Right ventricle myocardium inferior (tissue), 1 donor: ENCODE measurements at regions of chr20 and their contacts with region 1.

Region 1: GRCh38 chr20:25390538-25391528 is at the start of gene ABHD12:
- DNase-seq: peak; percentile 98
- ATAC-seq: peak; percentile 99
- total RNA-seq, gene ABHD12: 23.3 TPM

Region 2: DNA sequence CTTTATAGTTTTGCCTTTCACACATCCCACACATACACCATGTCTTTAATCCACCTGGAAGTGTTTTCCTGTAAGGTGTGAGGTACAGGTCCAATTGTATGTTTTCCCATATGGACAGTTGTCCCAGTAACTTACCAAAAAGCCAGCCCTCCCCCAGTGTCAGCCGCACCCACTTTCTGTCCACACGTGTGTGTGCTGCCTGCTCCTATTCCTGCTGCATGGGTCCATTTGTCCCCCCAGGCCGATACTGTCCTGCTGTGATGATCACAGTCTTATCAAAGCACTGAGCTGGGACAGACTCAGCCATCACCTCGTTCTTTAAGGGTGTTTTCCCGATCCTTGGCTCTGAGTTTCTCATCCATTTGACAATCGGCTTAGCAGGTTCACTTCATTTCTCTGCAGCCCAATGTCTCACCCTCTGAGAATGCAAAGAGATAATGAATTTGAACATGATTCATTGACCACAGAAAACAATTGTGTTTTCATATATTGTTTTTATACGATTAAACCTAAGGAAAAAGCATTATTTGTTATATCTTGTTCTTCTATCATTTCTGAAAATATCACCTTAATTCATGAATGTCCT is 318.5 kb before region 1 on chr20:
- intact Hi-C with region 1: loop called (anchors 5 kb)
- DNase-seq: no peak
- ATAC-seq: no peak

Region 3: DNA sequence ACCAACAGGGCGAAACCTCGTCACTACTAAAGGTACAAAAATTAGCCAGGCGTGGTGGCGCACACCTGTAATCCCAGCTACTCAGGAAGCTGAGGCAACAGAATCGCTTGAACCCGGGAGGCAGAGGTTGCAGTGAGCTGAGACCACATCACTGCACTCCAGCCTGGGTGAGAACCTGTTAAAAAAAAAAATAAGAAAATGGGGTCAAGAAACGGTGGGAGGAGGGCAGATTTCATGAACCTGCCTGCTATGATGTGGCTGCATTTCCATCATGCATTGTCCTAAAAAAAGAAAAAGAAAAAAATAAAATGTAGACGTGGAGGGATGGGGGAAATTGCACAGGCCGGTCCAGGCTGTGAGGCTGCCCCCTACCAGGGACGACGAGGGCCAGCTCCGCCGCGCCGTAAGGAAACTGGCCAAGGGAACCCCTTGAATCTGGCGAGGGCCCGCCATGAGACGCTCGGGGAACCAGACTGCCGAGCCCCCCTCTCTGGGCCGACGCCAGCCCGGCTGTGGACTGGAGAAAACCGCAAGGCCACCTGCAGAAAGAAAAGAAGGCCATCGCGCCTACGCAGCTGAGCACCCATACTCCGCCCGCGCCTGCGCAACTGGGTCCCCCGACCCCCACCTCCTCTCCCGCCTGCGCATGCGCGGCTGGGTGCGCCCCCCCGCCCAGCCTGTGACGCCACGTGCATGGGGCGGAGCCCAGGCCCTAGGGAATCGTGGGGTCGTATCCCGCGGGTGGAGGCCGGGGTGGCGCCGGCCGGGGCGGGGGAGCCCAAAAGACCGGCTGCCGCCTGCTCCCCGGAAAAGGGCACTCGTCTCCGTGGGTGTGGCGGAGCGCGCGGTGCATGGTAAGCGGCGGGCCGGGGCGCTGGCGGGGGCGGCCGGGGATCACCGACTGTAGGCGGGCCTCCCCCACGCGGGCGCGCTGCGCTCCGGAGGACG is 195.5 kb before region 1 on chr20 and contains the start of gene ENTPD6:
- intact Hi-C with region 1: loop called (anchors 5 kb)
- DNase-seq: peak; percentile 94
- ATAC-seq: peak; percentile 92
- total RNA-seq, gene ENTPD6: 132 TPM

Region 4: DNA sequence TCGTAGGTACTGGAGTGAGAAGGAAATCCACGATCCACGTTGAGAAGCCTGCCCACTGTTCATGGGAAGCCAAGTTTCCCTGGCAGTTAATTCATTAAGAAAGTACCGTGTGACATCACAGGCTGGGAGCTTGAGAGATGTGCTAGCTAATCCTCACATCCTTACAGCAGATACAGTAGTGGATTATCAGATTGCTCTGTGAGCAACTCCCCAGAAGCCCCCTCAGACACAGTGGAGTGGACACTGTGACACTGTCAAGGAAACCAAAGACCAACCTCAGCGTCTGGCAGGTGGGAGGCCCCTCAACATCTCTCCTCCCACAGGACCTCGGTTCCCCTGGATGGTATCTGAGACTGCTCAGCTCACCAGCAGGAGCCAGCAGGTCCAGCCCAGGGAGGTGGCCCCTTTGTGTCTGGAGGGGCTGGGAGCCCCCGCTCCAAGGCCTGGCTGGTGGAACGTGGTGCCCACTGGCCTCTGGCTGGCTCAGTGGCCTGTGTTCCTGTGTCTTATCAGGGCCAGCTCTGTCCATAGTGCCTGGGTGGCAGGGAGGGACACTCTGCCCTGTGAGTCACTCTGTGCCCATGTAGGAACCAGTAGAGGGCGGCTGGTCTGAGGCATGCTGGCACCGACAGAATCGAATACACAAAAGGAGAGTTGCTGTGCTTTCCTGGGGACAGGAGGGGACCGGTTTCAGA is 135.7 kb before region 1 on chr20:
- intact Hi-C with region 1: loop called (anchors 5 kb)
- DNase-seq: no peak
- ATAC-seq: peak; percentile 91

Region 5: GRCh38 chr20:25288266-25289181 is 102.3 kb before region 1 on chr20:
- intact Hi-C with region 1: no loop called
- DNase-seq: peak; percentile 63
- ATAC-seq: no peak